ENCODE measurements at regions of chr20 and their contacts with region 1.

Region 1: GRCh38 chr20:18507218-18508021 is at the start of gene SEC23B:
- DNase-seq: peak; percentile 95 to 96
- ATAC-seq: peak; percentile 99 to 100
- H3K4me3 ChIP-seq: peak within 1 kb of the TSS; percentile 76 to 95 (median 86)
- H3K27ac ChIP-seq: peak within 1 kb of the TSS; percentile 94 to 99 (median 96)
- H3K4me1 ChIP-seq: peaks cover 8 to 10% of the 10 kb centered on the region in 2 donors
- H3K27me3 ChIP-seq: no peaks in the 10 kb centered on the region
- CTCF ChIP-seq: no peak
- POLR2A ChIP-seq: peak; percentile 76 to 77
- total RNA-seq, gene SEC23B: 7.2 to 10.7 (median 8.1) TPM

Region 2: GRCh38 chr20:17968366-17969279 is 538.8 kb before region 1 on chr20 and contains the starts of genes MGME1 and SNX5:
- in situ Hi-C with region 1: loop called in 1 of 4 experiments (anchors 25 kb)
- intact Hi-C with region 1: loop called (anchors 2 kb)
- DNase-seq: peak; percentile 99
- ATAC-seq: peak; percentile 82 to 85
- H3K4me3 ChIP-seq: peak within 1 kb of the TSS; percentile 91 to 97 (median 94)
- H3K27ac ChIP-seq: peak within 1 kb of the TSS; percentile 93 to 99 (median 96)
- H3K4me1 ChIP-seq: peaks cover 75 to 76% of the 10 kb centered on the region in 2 donors
- H3K27me3 ChIP-seq: no peaks in the 10 kb centered on the region
- CTCF ChIP-seq: no peak
- POLR2A ChIP-seq: peak; percentile 55 to 68
- total RNA-seq, gene MGME1: 5.2 to 9.1 (median 7.2) TPM
- total RNA-seq, gene SNX5: 49.8 to 88.8 (median 60.9) TPM

Region 3: GRCh38 chr20:18466894-18467730 is 40.3 kb before region 1 on chr20 and contains the starts of genes DZANK1 and POLR3F:
- in situ Hi-C with region 1: no loop called
- intact Hi-C with region 1: loop called (anchors 1 kb)
- DNase-seq: peak; percentile 83 to 94
- ATAC-seq: peak; percentile 99 to 100
- H3K4me3 ChIP-seq: peak within 1 kb of the TSS; percentile 75 to 98 (median 91)
- H3K27ac ChIP-seq: peak within 1 kb of the TSS; percentile 77 to 93 (median 85)
- H3K4me1 ChIP-seq: peaks cover 19 to 21% of the 10 kb centered on the region in 2 donors
- H3K27me3 ChIP-seq: no peaks in the 10 kb centered on the region
- CTCF ChIP-seq: no peak
- POLR2A ChIP-seq: peak in 1 of 2 donors; percentile 37
- total RNA-seq, gene DZANK1: 0.18 to 1.0 (median 0.62) TPM
- total RNA-seq, gene POLR3F: 6.0 to 8.7 (median 6.8) TPM

Region 4: GRCh38 chr20:18566892-18567742 is 59.7 kb after region 1 on chr20 and contains the start of gene SMIM26:
- in situ Hi-C with region 1: no loop called
- intact Hi-C with region 1: loop called (anchors 1 kb)
- DNase-seq: peak; percentile 88
- ATAC-seq: peak; percentile 97 to 99
- H3K4me3 ChIP-seq: peak within 1 kb of the TSS; percentile 61 to 85 (median 78)
- H3K27ac ChIP-seq: peak within 1 kb of the TSS; percentile 82 to 90 (median 86)
- H3K4me1 ChIP-seq: peaks cover 13 to 20% of the 10 kb centered on the region in 2 donors
- H3K27me3 ChIP-seq: no peaks in the 10 kb centered on the region
- CTCF ChIP-seq: no peak
- POLR2A ChIP-seq: peak in 1 of 2 donors; percentile 45
- total RNA-seq, gene SMIM26: 203 to 374 (median 286) TPM

Region 5: DNA sequence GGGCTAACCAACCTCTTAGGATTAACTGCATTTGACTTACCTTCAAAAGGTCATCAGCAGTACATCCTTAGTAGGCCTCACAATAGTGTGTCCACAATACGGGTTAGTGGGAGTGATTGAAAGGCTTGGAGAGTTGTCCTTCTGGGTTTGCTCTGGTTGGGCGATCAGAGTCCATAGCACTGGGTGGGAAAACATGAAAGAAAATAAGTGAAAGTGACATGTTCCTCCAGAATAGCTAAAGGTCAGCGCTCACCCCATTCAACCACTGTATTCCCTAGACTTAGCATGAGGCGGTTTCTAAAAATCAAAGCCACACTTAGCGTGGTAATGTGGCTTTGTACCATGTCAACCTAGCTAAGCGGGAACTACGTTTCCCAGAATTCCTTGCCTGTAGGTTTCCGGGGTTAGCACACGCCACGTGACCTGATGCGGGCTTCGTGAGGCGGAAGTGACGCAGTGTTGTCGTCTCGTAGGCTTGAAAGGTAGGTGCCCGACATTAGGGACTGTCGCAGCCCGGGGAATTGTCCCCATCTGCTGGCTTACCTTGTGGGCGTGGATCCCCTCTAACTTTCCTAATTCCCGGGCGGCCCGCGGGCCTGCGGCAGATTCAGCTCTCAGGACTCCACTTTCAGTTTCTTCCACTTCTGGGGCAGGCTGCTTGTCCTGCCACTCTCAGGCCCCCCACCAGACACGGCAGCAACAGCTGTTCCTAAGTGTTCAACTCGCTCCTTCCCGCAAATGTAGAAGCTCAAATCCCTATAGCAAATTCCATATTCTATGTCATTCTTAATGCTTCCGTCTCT is 286.4 kb after region 1 on chr20:
- in situ Hi-C with region 1: no loop called
- intact Hi-C with region 1: loop called (anchors 10 kb)
- DNase-seq: peak; percentile 82 to 88
- ATAC-seq: peak; percentile 99 to 100
- H3K4me3 ChIP-seq: peak overlapping the region; percentile 82 to 87 (median 85)
- H3K27ac ChIP-seq: peak overlapping the region; percentile 91 to 96 (median 92)
- H3K4me1 ChIP-seq: peaks cover 17 to 18% of the 10 kb centered on the region in 2 donors
- H3K27me3 ChIP-seq: no peaks in the 10 kb centered on the region
- CTCF ChIP-seq: peak in 1 of 5 experiments; percentile 17
- POLR2A ChIP-seq: peak; percentile 58 to 66